Activated CD4-positive, alpha-beta memory T cell treated with anti-CD3 and anti-CD28 coated beads for 36 hours (primary cell): ENCODE measurements at regions of chr10 and their contacts with region 1.

Region 1: GRCh38 chr10:119650692-119651513 is at the start of gene BAG3:
- DNase-seq: peak; percentile 87
- H3K4me3 Mint-ChIP-seq: peak within 1 kb of the TSS; percentile 95
- H3K27ac Mint-ChIP-seq: peak within 1 kb of the TSS; percentile 97
- H3K4me1 Mint-ChIP-seq: peaks cover 37% of the 10 kb centered on the region
- H3K27me3 Mint-ChIP-seq: no peaks in the 10 kb centered on the region
- total RNA-seq, gene BAG3: 26.8 to 28.1 TPM

Region 2: GRCh38 chr10:118754720-118755480 is 896.0 kb before region 1 on chr10 and contains the start of gene CACUL1:
- CTCF ChIA-PET with region 1: no interaction called
- POLR2A ChIA-PET with region 1: no interaction called
- intact Hi-C with region 1: loop called (anchors 10 kb)
- DNase-seq: peak; percentile 100
- H3K4me3 Mint-ChIP-seq: peak within 1 kb of the TSS; percentile 91
- H3K27ac Mint-ChIP-seq: peak within 1 kb of the TSS; percentile 83
- H3K4me1 Mint-ChIP-seq: peaks cover 34% of the 10 kb centered on the region
- H3K27me3 Mint-ChIP-seq: peaks cover 6% of the 10 kb centered on the region
- total RNA-seq, gene CACUL1: 24.0 to 24.4 TPM

Region 3: GRCh38 chr10:119315128-119316001 is 335.5 kb before region 1 on chr10:
- CTCF ChIA-PET with region 1: no interaction called
- POLR2A ChIA-PET with region 1: no interaction called
- intact Hi-C with region 1: loop called (anchors 2 kb)
- DNase-seq: peak; percentile 90
- H3K4me3 Mint-ChIP-seq: peak overlapping the region; percentile 49
- H3K27ac Mint-ChIP-seq: peak overlapping the region; percentile 91
- H3K4me1 Mint-ChIP-seq: peaks cover 53% of the 10 kb centered on the region
- H3K27me3 Mint-ChIP-seq: peaks cover 5% of the 10 kb centered on the region

Region 4: DNA sequence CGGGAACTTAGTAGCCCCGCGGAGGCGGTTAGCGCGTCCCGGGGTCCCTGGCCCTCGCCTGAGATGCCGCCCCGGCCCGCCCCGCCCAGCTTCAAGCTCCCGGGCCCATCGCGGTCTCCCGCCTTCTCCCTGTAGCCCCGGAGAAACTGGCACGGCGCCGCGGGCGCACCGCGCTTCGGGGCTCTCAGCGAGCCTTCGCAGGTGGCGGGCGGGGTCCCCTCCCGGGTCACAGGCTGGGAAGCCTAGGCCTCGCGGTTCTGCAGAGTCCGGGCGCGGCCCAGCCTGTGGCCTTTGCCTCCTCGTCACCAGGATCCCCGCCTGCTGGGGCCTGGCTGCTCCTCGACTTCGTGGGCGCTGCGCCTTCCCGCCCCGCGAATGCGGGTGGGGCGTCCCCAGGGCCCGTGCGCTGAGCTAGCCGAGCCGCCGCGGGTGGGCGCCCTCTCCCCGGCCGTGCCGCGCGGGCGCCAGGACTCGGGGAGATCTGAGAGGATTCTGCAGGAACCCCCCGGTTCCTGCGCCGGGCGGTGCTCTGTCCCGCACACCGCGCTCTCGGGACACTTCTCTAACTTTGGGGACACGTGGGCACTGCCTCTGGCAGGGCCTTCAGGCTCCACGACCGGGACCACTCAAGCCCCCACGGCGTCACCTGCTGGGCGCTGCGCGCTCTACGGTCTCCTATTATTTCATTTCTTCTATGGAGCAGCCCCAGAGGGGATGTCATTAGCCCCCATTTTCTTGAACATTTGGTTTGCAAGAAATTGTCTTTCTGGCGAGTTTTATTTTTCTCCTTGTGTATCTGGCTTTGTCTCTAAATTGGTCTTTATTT is 107.7 kb before region 1 on chr10:
- CTCF ChIA-PET with region 1: interaction called, 12 read pairs
- POLR2A ChIA-PET with region 1: interaction called, 5 read pairs
- intact Hi-C with region 1: loop called (anchors 1 kb)
- DNase-seq: peak; percentile 79
- H3K4me3 Mint-ChIP-seq: peak overlapping the region; percentile 81
- H3K27ac Mint-ChIP-seq: peak overlapping the region; percentile 87
- H3K4me1 Mint-ChIP-seq: peaks cover 33% of the 10 kb centered on the region
- H3K27me3 Mint-ChIP-seq: no peaks in the 10 kb centered on the region

Region 5: DNA sequence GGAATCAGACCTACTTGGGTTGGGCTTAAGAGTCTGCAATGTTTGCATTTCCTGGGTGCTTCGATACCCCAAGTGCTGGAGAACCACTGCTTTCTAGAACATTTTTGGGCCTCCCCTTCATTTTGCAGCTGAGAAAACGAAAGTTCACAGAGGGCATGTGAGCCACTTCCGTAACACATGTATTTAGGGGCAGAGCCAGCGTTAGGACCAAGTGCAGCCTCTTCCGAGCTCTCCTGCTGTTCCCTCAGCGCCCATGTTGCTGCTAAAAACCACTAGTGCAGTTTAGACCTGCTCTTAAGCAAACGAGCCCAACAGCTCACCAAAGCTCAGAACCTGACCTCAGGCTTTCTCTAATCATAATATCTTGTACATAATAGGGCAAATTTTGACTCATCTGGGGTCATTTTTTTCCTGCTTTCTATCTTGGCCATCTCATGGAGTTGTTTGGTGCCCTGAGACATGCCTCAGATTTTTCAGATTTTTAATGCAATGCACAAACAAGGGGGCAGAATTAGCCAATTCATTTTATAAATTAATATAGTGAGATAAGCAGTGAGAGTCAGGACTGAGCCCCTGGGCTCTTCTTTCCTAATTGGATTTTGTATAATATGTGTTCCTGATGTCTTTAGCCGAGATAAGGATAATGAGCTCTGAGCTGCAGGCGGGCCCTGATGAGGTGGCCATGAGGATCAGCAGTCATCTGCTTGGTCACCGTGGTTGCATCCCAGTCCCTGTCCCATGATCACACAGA is 13.1 kb after region 1 on chr10:
- CTCF ChIA-PET with region 1: interaction called, 8 read pairs
- POLR2A ChIA-PET with region 1: interaction called, 8 read pairs
- intact Hi-C with region 1: loop called (anchors 1 kb)
- DNase-seq: peak; percentile 68
- H3K4me3 Mint-ChIP-seq: peak overlapping the region; percentile 69
- H3K27ac Mint-ChIP-seq: peak overlapping the region; percentile 97
- H3K4me1 Mint-ChIP-seq: peaks cover 64% of the 10 kb centered on the region
- H3K27me3 Mint-ChIP-seq: no peaks in the 10 kb centered on the region

Region 6: DNA sequence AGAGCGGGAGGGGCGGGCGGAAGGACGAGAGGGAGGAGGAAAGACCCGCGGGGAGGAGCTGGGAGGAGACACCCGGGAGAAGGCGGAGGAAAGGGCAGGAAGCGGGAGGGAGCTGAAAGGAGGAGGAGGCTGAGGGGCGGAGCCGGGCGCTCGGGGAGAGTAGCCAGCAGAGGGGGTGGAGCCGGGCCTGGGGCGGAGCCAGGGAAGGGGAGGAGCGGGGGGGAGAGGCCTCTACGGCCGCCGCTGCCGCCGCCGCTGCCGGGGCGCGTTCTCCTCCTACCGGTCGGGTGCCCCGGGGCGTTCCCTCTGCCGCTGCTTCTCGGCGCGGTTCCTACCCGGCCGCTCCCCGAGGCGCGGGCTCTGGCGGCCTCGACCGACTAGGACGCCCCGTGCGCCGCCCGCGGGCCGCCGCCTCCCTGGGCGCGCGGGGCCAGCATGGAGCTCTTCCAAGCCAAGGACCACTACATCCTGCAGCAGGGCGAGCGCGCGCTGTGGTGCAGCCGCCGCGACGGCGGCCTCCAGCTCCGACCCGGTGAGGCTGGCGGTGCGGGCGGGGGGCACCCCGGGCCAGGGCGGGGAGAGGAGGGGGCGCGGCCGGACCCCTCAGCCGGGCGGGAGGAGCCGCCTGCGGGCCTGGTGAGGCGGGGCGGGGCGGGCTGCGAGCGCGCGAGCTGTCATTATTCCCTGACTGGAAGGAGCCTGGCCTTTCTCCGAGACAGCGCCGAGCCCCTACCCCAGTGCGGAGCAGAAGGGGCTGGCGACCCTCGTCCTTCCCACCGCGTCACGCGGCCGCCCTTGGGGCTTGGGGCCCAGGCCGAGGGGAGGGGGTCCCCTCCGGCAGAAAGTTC is 75.1 kb after region 1 on chr10 and contains the start of gene INPP5F:
- CTCF ChIA-PET with region 1: interaction called, 5 read pairs
- POLR2A ChIA-PET with region 1: interaction called, 5 read pairs
- intact Hi-C with region 1: loop called (anchors 1 kb)
- DNase-seq: peak; percentile 100
- H3K4me3 Mint-ChIP-seq: peak within 1 kb of the TSS; percentile 91
- H3K27ac Mint-ChIP-seq: peak within 1 kb of the TSS; percentile 76
- H3K4me1 Mint-ChIP-seq: peaks cover 42% of the 10 kb centered on the region
- H3K27me3 Mint-ChIP-seq: no peaks in the 10 kb centered on the region
- total RNA-seq, gene INPP5F: 12.8 to 13.6 TPM